ENCODE measurements at regions of chr1 and their contacts with region 1.

Region 1: DNA sequence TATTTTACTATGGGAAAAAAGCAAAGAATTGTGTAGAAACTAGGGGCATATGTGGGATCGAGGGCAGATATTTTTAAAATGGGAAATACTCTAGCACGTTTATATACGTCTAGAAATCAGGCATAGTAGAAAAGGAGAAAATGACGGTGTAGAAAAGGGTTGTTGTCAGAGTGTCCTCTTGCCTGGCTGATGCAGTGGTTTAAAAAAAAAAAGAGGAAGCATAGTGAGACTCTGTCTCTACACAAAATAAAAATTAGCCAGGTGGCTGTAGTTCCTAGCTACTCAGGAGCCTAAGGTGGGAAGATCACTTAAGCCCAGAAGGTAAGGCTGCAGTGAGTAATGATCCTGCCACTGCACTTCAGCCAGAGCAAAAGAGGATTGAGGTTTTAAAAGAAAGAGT is 64.7 kb upstream of the LRRC7 start:
- DNase-seq: no peak
- ATAC-seq: no peak
- H3K4me3 ChIP-seq: no peak overlapping the region
- H3K27ac ChIP-seq: no peak overlapping the region
- H3K4me1 ChIP-seq: no peaks in the 10 kb centered on the region
- H3K27me3 ChIP-seq: no peaks in the 10 kb centered on the region
- CTCF ChIP-seq: no peak
- POLR2A ChIP-seq: no peak

Region 2: DNA sequence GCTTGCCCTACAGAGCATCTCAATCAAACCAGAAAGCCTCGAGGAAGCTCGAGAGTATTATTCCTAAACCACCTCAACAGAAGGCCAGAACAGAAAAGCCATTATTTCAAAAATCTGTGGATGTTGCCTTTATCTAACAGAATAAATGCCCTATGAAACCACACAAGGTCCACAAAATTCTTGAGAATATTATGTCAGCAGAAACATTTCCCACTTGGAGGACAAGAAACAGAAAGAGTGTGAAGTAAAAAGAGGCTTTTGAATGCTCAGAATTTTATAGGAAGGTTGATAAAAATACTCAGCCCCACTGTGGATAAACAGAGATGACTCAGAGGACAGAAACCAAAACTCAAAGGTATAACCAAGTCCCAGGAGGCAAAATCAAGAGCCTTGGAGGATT is 81.7 kb before region 1 on chr1:
- intact Hi-C with region 1: no loop called
- DNase-seq: no peak
- ATAC-seq: no peak
- H3K4me3 ChIP-seq: no peak overlapping the region
- H3K27ac ChIP-seq: no peak overlapping the region
- H3K4me1 ChIP-seq: no peaks in the 10 kb centered on the region
- H3K27me3 ChIP-seq: no peaks in the 10 kb centered on the region
- CTCF ChIP-seq: no peak
- POLR2A ChIP-seq: no peak

Region 3: GRCh38 chr1:69523032-69523431 is 20.0 kb after region 1 on chr1:
- intact Hi-C with region 1: no loop called
- DNase-seq: no peak
- ATAC-seq: no peak
- H3K4me3 ChIP-seq: no peak overlapping the region
- H3K27ac ChIP-seq: no peak overlapping the region
- H3K4me1 ChIP-seq: no peaks in the 10 kb centered on the region
- H3K27me3 ChIP-seq: no peaks in the 10 kb centered on the region
- CTCF ChIP-seq: no peak
- POLR2A ChIP-seq: no peak

Region 4: DNA sequence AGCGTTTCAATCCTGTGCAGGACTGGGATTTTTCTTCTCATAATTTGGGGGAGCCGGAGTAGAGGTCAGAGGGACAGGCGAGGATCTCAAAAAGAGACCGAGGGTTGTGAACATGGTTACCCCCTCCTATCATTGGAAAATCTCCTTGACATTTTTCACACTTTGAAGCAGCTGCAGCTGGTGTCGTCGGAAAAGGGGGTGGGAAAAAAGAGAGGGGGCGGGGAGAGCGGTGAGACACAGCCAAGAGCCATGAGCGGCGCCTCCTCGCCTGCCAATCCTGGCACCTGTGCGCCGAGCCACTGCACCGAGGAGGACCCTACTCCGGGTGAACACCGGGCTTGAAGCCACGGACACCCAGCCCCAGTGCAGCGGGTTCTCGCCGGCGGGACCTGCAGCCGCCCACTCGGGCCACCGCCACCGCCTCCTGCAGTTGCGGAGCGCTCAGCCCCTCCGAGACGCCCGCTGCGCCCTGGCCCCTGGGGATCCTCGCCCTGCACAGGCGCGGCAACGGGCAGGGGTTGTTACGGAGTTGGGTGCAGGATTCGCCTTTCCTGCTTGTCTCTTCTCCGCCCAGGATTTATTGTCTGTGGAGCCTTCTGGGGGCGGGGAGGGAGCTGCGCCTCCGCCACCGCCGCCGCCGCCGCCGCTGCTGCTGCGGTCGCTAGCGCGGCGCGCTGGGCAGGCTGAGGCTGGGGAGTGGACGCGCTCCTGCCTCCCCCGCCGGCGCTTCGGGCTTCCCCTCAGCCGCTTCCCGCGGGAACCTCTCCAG is 64.8 kb after region 1 on chr1 and contains the start of gene LRRC7:
- intact Hi-C with region 1: loop called in 1 of 10 experiments (anchors 10 kb)
- DNase-seq: peak in 2 of 5 donors; percentile 24 to 57
- ATAC-seq: peak in 2 of 4 donors; percentile 42 to 65
- H3K4me3 ChIP-seq: peak within 1 kb of the TSS; percentile 26 to 59 (median 49)
- H3K27ac ChIP-seq: peak within 1 kb of the TSS in 1 of 12 donors; percentile 46
- H3K4me1 ChIP-seq: peaks cover 0 to 24% (median 0%) of the 10 kb centered on the region in 12 donors
- H3K27me3 ChIP-seq: peaks cover 3 to 54% (median 20%) of the 10 kb centered on the region in 9 donors
- CTCF ChIP-seq: no peak
- POLR2A ChIP-seq: no peak
- total RNA-seq, gene LRRC7: 0.25 to 4.1 (median 0.54) TPM